ENCODE measurements at regions of chr9 and their contacts with region 1.

Region 1: DNA sequence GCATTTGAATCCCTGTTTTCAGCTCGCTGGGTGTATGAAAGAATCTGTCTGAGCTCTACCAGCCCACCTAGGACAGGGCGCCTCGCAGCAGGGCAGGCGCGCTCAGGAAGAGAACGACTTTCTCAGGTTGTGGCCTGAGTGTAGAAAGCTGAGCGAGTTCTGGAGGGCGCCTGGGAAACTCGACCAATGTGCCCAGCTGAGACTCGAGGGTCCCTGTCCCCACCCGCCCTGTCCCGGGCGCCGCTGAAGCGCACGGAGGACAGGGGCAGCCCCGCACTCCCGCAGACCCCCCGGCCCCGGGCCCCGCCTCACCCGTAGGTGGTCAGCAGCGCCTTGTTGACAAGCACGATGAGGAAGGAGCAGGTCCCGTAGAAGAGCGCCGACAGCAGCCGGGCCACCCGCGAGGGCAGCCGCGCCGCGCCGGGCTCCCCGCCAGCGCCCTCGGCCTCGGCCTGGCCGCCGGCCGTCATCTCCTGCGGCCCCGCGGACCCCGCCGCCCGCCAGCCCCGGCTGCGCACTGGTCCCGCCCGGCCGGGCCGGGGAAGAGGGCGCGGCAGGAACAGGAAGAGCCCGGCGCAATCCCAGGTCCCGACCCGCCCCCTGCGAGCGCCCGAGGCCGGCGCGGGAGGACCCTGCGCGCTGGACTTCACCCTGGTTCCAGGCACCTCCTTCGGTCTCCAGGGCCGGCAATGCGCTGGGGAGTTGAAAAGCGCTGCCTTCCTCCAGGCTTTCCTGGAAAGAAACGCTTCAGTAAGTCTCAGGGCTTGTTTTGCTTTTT is at the start of gene SLC35D2:
- DNase-seq: peak in 2 of 5 donors; percentile 12 to 13
- H3K4me3 ChIP-seq: peak within 1 kb of the TSS; percentile 61 to 71
- H3K4me3 Mint-ChIP-seq: peak within 1 kb of the TSS; percentile 84 to 94 (median 90)
- H3K27ac ChIP-seq: peak within 1 kb of the TSS; percentile 65
- H3K27ac Mint-ChIP-seq: peak within 1 kb of the TSS; percentile 81 to 94 (median 87)
- H3K4me1 ChIP-seq: peaks cover 27% of the 10 kb centered on the region
- H3K4me1 Mint-ChIP-seq: peaks cover 27 to 49% (median 35%) of the 10 kb centered on the region in 4 donors
- H3K27me3 ChIP-seq: no peaks in the 10 kb centered on the region
- H3K27me3 Mint-ChIP-seq: no peaks in the 10 kb centered on the region
- total RNA-seq, gene SLC35D2: 29.8 to 30.3 TPM

Region 2: DNA sequence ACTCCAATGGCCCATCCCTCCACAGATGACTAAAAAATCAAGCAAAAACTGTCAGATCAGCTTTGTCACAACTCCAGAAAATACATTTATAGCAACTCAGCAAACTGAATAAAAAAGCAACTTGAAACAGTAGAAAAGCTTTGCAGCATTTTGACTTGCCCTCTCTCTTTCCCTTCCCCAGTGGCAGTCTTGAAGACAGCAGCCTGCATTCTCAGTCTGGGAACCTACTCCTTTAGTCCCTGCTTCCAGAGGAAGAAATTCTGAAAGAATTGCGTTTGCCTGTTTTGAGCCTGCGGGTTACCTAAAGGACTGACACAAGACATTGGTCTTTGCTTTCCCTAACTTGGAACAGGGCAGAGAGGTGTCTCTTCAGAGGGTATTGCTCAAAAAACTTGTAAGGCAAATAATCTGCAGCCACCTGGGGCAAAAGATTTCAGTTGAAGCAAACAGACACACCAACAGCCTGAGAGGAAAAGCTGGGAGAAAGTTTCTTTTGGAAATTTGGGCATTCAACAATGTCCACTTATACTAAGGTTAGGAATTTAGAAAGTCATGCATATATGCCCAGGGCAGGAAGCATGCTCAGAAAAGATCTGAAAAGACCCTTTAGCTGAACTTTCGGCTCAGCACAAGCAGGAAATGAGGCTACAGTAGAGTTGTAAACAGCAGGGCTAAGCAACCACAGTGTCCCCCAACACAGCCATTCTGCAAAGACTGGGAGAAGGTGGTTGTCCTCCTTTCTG is 15.4 kb after region 1 on chr9:
- CTCF ChIA-PET with region 1: interaction called, 5 read pairs
- POLR2A ChIA-PET with region 1: interaction called, 30 read pairs
- intact Hi-C with region 1: no loop called
- DNase-seq: peak in 2 of 5 donors; percentile 12 to 15
- H3K4me3 ChIP-seq: no peak overlapping the region
- H3K4me3 Mint-ChIP-seq: peak overlapping the region; percentile 48 to 81 (median 56)
- H3K27ac ChIP-seq: peak overlapping the region; percentile 43
- H3K27ac Mint-ChIP-seq: peak overlapping the region; percentile 74 to 96 (median 82)
- H3K4me1 ChIP-seq: peaks cover 28% of the 10 kb centered on the region
- H3K4me1 Mint-ChIP-seq: peaks cover 20 to 27% (median 23%) of the 10 kb centered on the region in 4 donors
- H3K27me3 ChIP-seq: no peaks in the 10 kb centered on the region
- H3K27me3 Mint-ChIP-seq: no peaks in the 10 kb centered on the region